B cell (primary cell): ENCODE measurements at regions of chr7 and their contacts with region 1.

Region 1: DNA sequence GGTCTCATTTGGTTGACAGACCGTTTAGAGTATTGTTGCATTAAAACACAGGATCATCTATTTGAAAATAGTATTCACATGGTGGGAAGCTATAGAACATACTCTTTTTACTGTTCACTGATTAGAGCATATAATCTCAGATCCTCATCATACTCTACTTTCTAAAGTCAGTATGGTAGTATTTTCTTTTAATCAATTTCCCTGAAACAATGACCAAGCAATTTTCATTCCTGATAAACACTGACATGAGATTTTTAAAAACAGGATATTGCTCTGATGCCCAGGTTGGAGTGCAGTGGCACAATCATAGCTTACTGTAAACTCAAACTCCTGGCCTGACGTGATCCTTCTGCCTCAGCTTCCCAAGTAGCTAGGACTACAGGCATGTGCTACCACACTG is 63.9 kb downstream of the PTPN12 start:
- DNase-seq: no peak
- ATAC-seq: no peak
- H3K4me3 ChIP-seq: no peak overlapping the region
- H3K4me3 Mint-ChIP-seq: no peak overlapping the region
- H3K27ac ChIP-seq: no peak overlapping the region
- H3K27ac Mint-ChIP-seq: no peak overlapping the region
- H3K4me1 ChIP-seq: no peaks in the 10 kb centered on the region
- H3K4me1 Mint-ChIP-seq: no peaks in the 10 kb centered on the region
- H3K27me3 ChIP-seq: no peaks in the 10 kb centered on the region
- H3K27me3 Mint-ChIP-seq: no peaks in the 10 kb centered on the region
- CTCF ChIP-seq: no peak

Region 2: DNA sequence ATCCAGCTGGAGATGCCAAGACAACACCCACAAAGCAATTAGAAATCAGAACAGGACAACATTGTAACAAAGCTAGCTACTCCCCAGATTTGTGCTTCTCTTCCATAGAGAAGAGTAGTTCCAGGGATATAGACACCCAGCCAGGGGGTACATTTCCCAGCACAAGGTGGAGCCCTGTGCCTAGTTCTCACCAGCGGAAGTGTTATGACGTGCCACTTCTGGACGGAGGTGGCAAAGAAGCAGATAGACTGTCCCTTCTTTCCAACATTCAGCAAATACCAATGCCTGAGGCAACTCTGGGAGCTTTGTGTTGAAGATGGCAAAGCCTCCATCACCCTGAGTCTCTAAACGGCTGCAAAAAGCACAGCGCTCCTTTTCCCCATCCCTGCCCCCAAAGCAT is 161.4 kb before region 1 on chr7:
- CTCF ChIA-PET with region 1: no interaction called
- POLR2A ChIA-PET with region 1: no interaction called
- intact Hi-C with region 1: no loop called
- DNase-seq: no peak
- ATAC-seq: no peak
- H3K4me3 ChIP-seq: no peak overlapping the region
- H3K4me3 Mint-ChIP-seq: no peak overlapping the region
- H3K27ac ChIP-seq: no peak overlapping the region
- H3K27ac Mint-ChIP-seq: no peak overlapping the region
- H3K4me1 ChIP-seq: no peaks in the 10 kb centered on the region
- H3K4me1 Mint-ChIP-seq: no peaks in the 10 kb centered on the region
- H3K27me3 ChIP-seq: no peaks in the 10 kb centered on the region
- H3K27me3 Mint-ChIP-seq: no peaks in the 10 kb centered on the region
- CTCF ChIP-seq: no peak

Region 3: DNA sequence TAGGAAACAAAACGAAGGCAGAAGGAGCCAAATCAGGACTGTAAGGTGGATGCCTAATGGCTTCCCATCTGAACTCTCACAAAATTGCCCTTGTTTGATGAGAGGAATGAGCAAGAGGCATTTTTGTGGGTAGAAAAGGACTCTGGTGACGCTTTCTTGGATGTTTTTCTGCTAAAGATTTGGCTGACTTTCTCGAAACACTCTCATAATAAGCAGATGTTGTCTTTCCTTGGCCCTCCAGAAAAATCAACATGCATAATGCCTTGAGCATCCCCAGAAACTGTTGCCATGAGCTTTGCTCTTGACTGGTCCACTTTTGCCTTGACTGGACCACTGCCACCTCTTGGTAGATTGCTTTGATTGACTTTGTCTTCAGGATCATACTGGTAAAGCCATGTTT is 50.4 kb before region 1 on chr7:
- CTCF ChIA-PET with region 1: no interaction called
- POLR2A ChIA-PET with region 1: no interaction called
- intact Hi-C with region 1: loop called (anchors 5 kb)
- DNase-seq: no peak
- ATAC-seq: no peak
- H3K4me3 ChIP-seq: no peak overlapping the region
- H3K4me3 Mint-ChIP-seq: no peak overlapping the region
- H3K27ac ChIP-seq: no peak overlapping the region
- H3K27ac Mint-ChIP-seq: no peak overlapping the region
- H3K4me1 ChIP-seq: peaks cover 3 to 6% of the 10 kb centered on the region in 2 donors
- H3K4me1 Mint-ChIP-seq: peaks cover 29% of the 10 kb centered on the region
- H3K27me3 ChIP-seq: no peaks in the 10 kb centered on the region
- H3K27me3 Mint-ChIP-seq: no peaks in the 10 kb centered on the region
- CTCF ChIP-seq: no peak